ENCODE measurements at regions of chr14 and their contacts with region 1.

Region 1: DNA sequence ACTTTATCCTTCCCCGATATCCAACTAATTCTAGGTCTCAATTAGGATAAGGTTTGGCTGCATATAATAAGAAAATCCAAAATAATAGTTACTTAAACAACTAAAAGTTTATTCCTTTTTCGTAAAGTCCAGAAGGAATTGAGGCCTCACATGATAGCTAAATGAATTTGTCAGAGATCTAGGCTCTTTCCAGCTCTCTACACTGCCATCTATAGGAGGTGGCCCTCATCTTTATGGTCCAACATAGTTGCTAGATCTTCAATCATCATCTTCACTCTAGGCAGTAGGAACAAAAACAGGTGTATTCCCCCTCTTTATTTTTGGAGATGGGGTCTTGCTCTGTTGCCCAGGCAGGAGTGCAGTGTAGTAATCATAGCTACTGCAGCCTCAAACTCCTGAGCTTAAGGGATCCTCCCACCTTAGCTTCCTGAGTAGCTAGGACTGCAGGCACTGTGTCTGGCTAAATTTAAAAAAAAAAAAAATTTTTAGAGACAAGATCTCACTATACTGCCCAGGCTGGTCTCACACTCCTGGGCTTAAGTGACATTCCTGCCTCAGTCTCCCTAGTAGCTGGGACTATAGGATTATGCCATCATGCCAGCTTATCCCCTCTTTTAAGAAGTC is 46.5 kb upstream of the SAV1 start:
- DNase-seq: no peak
- H3K4me3 ChIP-seq: no peak overlapping the region
- H3K27ac ChIP-seq: no peak overlapping the region
- H3K4me1 ChIP-seq: no peaks in the 10 kb centered on the region
- H3K27me3 ChIP-seq: no peaks in the 10 kb centered on the region
- CTCF ChIP-seq: peak in 2 of 4 experiments; percentile 28 to 48
- EP300 ChIP-seq: no peak
- POLR2A ChIP-seq: no peak

Region 2: DNA sequence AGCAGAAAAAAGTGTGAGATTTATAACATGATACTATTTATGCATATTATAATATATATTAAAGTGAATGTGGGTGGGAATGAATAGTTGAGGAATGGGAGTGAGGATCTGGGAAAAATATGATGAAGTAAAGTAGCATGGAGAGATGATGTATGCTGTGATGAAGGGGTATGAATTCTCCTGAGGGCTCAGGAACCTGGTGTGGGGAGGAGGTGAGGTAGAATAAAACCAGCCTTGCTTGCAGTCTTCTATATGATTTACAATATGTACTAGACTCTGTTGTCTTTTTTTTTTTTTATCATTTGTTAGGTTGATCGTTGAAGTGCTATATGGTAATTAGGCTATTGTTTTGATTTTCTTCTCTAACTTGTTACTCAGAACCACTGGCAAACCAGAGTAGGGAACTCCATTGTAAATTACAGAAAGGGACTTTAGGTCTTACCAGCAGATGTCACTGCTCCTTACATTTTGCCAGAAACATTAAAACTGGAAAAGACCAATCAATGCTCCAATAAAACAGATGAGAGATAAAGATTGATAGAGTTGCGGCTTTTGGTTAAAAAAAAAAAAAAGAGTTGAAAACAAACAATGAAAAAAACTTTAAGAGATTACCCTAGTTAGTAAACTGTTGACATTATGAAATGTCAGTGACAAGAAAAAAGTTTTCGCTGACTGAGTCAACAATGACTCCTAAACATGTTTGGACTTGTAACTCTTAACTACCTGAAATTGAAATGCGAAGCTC is 114.7 kb before region 1 on chr14:
- intact Hi-C with region 1: loop called (anchors 5 kb)
- DNase-seq: no peak
- H3K4me3 ChIP-seq: no peak overlapping the region
- H3K27ac ChIP-seq: no peak overlapping the region
- H3K4me1 ChIP-seq: no peaks in the 10 kb centered on the region
- H3K27me3 ChIP-seq: no peaks in the 10 kb centered on the region
- CTCF ChIP-seq: peak in 3 of 4 experiments; percentile 25 to 44 (median 33)
- EP300 ChIP-seq: no peak
- POLR2A ChIP-seq: no peak

Measured in sigmoid colon (tissue), 7 donors.